Activated T-helper 1 cell treated with anti-CD3 and anti-CD28 coated beads, Interleukin-12 subunit alpha, Interleukin-12 subunit beta, Interleukin-2, Interleukin-4 antibody, amounts not matched to agents 30 ng/mL and 10 ng/mL and 1 ng/mL, durations not matched to agents 14 hours and 24 hours and 36 hours (primary cell): ENCODE measurements at regions of chr5 and their contacts with region 1.

Region 1: GRCh38 chr5:59039296-59040023 is 456.6 kb downstream of the RAB3C start:
- DNase-seq: peak; percentile 88
- H3K4me3 Mint-ChIP-seq: peak overlapping the region; percentile 89
- H3K27ac Mint-ChIP-seq: peak overlapping the region; percentile 99
- H3K4me1 Mint-ChIP-seq: peaks cover 56% of the 10 kb centered on the region
- H3K27me3 Mint-ChIP-seq: no peaks in the 10 kb centered on the region

Region 2: DNA sequence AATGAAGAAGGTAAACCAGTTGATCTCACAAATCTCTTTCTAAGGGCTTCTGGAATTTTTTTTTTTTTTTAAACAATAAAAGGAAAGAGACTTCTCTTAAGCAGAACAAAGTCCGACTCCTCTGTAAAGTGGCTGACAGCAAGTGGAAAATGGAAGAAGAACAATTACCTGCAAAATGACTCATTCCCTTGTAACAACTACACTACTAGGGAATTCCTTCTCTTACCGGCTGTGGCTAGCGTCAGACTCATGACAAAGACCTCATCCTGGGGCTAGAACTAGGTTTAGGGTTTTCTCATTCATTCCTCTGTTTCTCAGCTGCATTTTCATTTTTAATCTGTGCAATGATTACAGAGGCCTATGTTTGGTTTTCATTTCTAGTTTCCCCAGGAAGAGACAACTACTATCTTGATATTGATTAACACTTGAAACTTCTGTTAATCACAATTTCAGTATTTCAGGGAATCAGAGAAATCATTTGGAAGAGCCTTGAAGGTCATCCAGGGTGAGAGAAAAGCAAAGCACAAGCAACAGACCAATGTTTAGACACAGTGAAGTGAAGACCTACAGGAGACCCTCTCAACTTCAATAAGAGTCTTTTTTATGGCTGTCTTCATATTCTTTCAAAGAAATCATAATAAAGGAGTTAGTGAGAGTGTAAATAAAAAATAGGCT is 18.7 kb before region 1 on chr5:
- intact Hi-C with region 1: loop called (anchors 1 kb)
- DNase-seq: no peak
- H3K4me3 Mint-ChIP-seq: peak overlapping the region; percentile 15
- H3K27ac Mint-ChIP-seq: peak overlapping the region; percentile 94
- H3K4me1 Mint-ChIP-seq: peaks cover 75% of the 10 kb centered on the region
- H3K27me3 Mint-ChIP-seq: no peaks in the 10 kb centered on the region

Region 3: GRCh38 chr5:59119480-59119879 is 80.0 kb after region 1 on chr5:
- intact Hi-C with region 1: no loop called
- DNase-seq: no peak
- H3K4me3 Mint-ChIP-seq: no peak overlapping the region
- H3K27ac Mint-ChIP-seq: no peak overlapping the region
- H3K4me1 Mint-ChIP-seq: peaks cover 6% of the 10 kb centered on the region
- H3K27me3 Mint-ChIP-seq: peaks cover 2% of the 10 kb centered on the region

Region 4: GRCh38 chr5:59174248-59174844 is 134.9 kb after region 1 on chr5:
- intact Hi-C with region 1: loop called (anchors 1 kb)
- DNase-seq: no peak
- H3K4me3 Mint-ChIP-seq: no peak overlapping the region
- H3K27ac Mint-ChIP-seq: no peak overlapping the region
- H3K4me1 Mint-ChIP-seq: peaks cover 53% of the 10 kb centered on the region
- H3K27me3 Mint-ChIP-seq: no peaks in the 10 kb centered on the region

Region 5: DNA sequence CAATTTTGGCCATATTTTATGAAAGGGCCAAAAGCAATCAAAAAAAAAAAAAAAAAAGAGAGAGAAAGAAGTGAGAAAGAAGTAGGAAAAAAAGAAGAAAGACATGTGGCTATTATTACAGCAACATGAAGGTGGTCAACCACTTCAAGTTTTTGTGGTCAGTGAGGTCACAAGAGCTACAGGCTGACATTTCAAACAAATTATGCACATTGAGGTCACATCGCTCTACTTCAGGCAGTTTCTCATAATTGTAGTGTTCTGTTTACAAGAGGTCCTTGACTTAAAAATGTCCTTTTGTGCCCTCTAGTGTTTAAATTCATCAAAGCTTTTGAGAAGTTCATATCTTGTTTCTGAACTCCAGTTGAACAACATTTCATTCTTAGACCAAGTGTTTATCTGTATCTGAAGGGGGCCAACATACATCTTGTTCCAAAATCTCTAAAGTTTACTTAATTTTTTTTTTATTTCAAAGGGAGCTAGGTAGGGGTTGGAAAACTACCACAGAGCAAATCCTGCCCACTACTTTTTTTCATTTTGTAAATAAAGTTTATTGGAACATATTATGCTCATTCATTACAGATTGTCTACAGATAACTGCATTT is 341.0 kb after region 1 on chr5:
- intact Hi-C with region 1: loop called (anchors 10 kb)
- DNase-seq: no peak
- H3K4me3 Mint-ChIP-seq: no peak overlapping the region
- H3K27ac Mint-ChIP-seq: no peak overlapping the region
- H3K4me1 Mint-ChIP-seq: peaks cover 4% of the 10 kb centered on the region
- H3K27me3 Mint-ChIP-seq: peaks cover 10% of the 10 kb centered on the region